ENCODE measurements at regions of chr6 and their contacts with region 1.

Region 1: GRCh38 chr6:42017021-42017643 is 33.2 kb upstream of the TAF8 start:
- DNase-seq: peak; percentile 37
- H3K4me3 Mint-ChIP-seq: peak overlapping the region; percentile 29
- H3K27ac Mint-ChIP-seq: peak overlapping the region; percentile 89
- H3K4me1 Mint-ChIP-seq: peaks cover 73% of the 10 kb centered on the region
- H3K27me3 Mint-ChIP-seq: no peaks in the 10 kb centered on the region

Region 2: GRCh38 chr6:41941280-41942066 is 75.7 kb before region 1 on chr6 and contains the start of gene CCND3:
- CTCF ChIA-PET with region 1: interaction called, 11 read pairs
- POLR2A ChIA-PET with region 1: no interaction called
- DNase-seq: peak; percentile 92
- H3K4me3 Mint-ChIP-seq: peak within 1 kb of the TSS; percentile 100
- H3K27ac Mint-ChIP-seq: peak within 1 kb of the TSS; percentile 97
- H3K4me1 Mint-ChIP-seq: peaks cover 51% of the 10 kb centered on the region
- H3K27me3 Mint-ChIP-seq: no peaks in the 10 kb centered on the region
- total RNA-seq, gene CCND3: 461 to 520 TPM

Region 3: GRCh38 chr6:42028234-42029061 is 11.3 kb after region 1 on chr6:
- CTCF ChIA-PET with region 1: interaction called, 11 read pairs
- POLR2A ChIA-PET with region 1: interaction called, 3 read pairs
- DNase-seq: no peak
- H3K4me3 Mint-ChIP-seq: peak overlapping the region; percentile 52
- H3K27ac Mint-ChIP-seq: peak overlapping the region; percentile 90
- H3K4me1 Mint-ChIP-seq: peaks cover 92% of the 10 kb centered on the region
- H3K27me3 Mint-ChIP-seq: no peaks in the 10 kb centered on the region

Measured in activated CD4-positive, alpha-beta T cell treated with anti-CD3 and anti-CD28 coated beads, Interleukin-2, amount 10 ng/mL, durations not matched to agents 7 days and 5 days (primary cell).